Naive thymus-derived CD4-positive, alpha-beta T cell (primary cell): ENCODE measurements at regions of chr16 and their contacts with region 1.

Region 1: GRCh38 chr16:28943281-28943680 is 7.5 kb upstream of the NFATC2IP start:
- DNase-seq: no peak
- ATAC-seq: no peak
- H3K4me3 ChIP-seq: no peak overlapping the region
- H3K4me3 Mint-ChIP-seq: no peak overlapping the region
- H3K27ac ChIP-seq: no peak overlapping the region
- H3K27ac Mint-ChIP-seq: no peak overlapping the region
- H3K4me1 ChIP-seq: peaks cover 0 to 8% of the 10 kb centered on the region in 2 donors
- H3K4me1 Mint-ChIP-seq: peaks cover 7 to 19% (median 8%) of the 10 kb centered on the region in 7 donors
- H3K27me3 ChIP-seq: no peaks in the 10 kb centered on the region
- H3K27me3 Mint-ChIP-seq: peaks cover 0 to 10% (median 0%) of the 10 kb centered on the region in 5 donors

Region 2: DNA sequence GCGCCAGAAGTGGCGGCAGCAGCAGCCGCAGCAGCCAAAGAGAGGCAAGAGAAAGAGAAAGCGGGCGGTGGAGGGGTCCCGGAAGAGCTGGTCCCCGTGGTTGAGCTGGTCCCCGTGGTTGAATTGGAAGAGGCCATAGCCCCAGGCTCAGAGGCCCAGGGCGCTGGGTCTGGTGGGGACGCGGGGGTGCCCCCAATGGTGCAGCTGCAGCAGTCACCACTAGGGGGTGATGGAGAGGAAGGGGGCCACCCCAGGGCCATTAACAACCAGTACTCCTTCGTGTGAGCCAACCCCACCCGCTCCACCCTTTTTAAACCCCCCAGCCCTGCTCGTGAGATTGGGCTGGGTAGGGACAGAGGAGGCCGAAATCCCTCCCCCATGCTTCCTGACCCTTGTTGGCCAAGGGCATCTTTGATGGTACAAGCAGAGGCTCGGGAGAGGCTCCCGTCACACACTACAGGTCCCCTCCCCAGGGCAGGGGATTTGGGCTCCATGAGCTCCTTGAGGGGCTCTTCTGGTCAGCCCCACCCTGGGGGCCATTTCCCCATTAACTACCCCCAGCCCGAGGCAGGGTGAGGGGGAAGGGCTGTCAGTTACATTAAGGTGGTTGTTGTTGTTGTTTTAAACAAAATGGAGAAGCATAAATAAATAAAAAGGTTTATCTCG is 69.6 kb before region 1 on chr16:
- CTCF ChIA-PET with region 1: interaction called, 5 read pairs
- POLR2A ChIA-PET with region 1: no interaction called
- intact Hi-C with region 1: loop called (anchors 1 kb)
- DNase-seq: peak; percentile 39 to 66 (median 55)
- ATAC-seq: peak; percentile 92
- H3K4me3 ChIP-seq: no peak overlapping the region
- H3K4me3 Mint-ChIP-seq: no peak overlapping the region
- H3K27ac ChIP-seq: no peak overlapping the region
- H3K27ac Mint-ChIP-seq: no peak overlapping the region
- H3K4me1 ChIP-seq: no peaks in the 10 kb centered on the region
- H3K4me1 Mint-ChIP-seq: peaks cover 0 to 8% (median under 1%) of the 10 kb centered on the region in 7 donors
- H3K27me3 ChIP-seq: no peaks in the 10 kb centered on the region
- H3K27me3 Mint-ChIP-seq: no peaks in the 10 kb centered on the region